CD4-positive, alpha-beta T cell (primary cell): ENCODE measurements at regions of chr12 and their contacts with region 1.

Region 1: DNA sequence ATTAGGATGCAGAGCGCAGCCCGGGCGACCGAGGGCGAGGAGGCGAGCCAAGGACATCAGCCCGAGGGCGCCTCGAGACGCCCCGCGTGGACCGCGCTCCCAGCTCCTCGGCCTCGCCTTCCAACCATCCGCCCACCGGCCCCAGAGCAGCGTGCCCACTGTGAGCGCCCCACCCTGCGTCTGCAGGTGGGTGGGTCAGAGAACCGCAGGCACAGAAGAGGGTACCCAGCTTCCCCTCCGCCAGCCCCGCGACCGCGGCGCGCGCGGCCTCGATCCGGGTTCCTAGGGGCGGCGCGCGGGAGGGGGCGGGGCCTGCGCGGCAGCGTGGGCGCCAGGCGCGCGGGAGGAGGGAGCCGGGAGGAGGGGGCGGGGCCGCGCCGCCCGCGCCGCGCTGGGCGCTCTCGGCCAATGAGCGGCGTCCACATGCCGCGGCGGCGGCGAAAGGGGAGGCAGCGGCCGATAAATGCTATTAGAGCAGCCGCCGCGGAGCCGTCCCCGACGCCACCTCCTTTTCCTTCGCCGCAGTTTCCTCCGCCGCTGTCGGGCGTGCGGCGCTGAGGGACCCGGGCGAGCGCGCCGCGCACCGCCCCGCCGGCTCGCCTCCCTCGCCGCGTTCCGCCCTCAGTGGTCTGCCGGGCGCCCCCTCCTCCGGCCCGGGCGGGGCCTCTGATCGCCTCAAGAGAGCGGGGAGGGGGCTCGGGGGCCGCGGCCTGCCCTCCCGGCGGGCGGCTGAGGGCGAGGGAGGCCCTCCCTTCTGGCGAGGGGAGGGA is at the start of gene ATP2A2:
- DNase-seq: peak; percentile 80 to 98 (median 88)
- ATAC-seq: peak; percentile 87
- H3K4me3 ChIP-seq: peak within 1 kb of the TSS; percentile 82
- H3K4me3 Mint-ChIP-seq: peak within 1 kb of the TSS; percentile 97
- H3K27ac ChIP-seq: peak within 1 kb of the TSS; percentile 40 to 77
- H3K27ac Mint-ChIP-seq: peak within 1 kb of the TSS; percentile 91
- H3K4me1 ChIP-seq: peaks cover 23% of the 10 kb centered on the region
- H3K4me1 Mint-ChIP-seq: peaks cover 46% of the 10 kb centered on the region
- H3K27me3 ChIP-seq: no peaks in the 10 kb centered on the region
- H3K27me3 Mint-ChIP-seq: no peaks in the 10 kb centered on the region
- CTCF ChIP-seq: no peak
- total RNA-seq, gene ATP2A2: 113 to 117 TPM

Region 2: GRCh38 chr12:109880016-109880931 is 400.7 kb before region 1 on chr12 and contains the start of gene GLTP:
- CTCF ChIA-PET with region 1: no interaction called
- POLR2A ChIA-PET with region 1: no interaction called
- intact Hi-C with region 1: loop called in 1 of 2 experiments (anchors 5 kb)
- DNase-seq: peak; percentile 78 to 97 (median 88)
- ATAC-seq: peak; percentile 96
- H3K4me3 ChIP-seq: peak within 1 kb of the TSS; percentile 98
- H3K4me3 Mint-ChIP-seq: peak within 1 kb of the TSS; percentile 92
- H3K27ac ChIP-seq: peak within 1 kb of the TSS; percentile 81 to 85
- H3K27ac Mint-ChIP-seq: peak within 1 kb of the TSS; percentile 87
- H3K4me1 ChIP-seq: peaks cover 35% of the 10 kb centered on the region
- H3K4me1 Mint-ChIP-seq: peaks cover 54% of the 10 kb centered on the region
- H3K27me3 ChIP-seq: no peaks in the 10 kb centered on the region
- H3K27me3 Mint-ChIP-seq: no peaks in the 10 kb centered on the region
- CTCF ChIP-seq: no peak
- total RNA-seq, gene GLTP: 24.8 to 25.2 TPM

Region 3: DNA sequence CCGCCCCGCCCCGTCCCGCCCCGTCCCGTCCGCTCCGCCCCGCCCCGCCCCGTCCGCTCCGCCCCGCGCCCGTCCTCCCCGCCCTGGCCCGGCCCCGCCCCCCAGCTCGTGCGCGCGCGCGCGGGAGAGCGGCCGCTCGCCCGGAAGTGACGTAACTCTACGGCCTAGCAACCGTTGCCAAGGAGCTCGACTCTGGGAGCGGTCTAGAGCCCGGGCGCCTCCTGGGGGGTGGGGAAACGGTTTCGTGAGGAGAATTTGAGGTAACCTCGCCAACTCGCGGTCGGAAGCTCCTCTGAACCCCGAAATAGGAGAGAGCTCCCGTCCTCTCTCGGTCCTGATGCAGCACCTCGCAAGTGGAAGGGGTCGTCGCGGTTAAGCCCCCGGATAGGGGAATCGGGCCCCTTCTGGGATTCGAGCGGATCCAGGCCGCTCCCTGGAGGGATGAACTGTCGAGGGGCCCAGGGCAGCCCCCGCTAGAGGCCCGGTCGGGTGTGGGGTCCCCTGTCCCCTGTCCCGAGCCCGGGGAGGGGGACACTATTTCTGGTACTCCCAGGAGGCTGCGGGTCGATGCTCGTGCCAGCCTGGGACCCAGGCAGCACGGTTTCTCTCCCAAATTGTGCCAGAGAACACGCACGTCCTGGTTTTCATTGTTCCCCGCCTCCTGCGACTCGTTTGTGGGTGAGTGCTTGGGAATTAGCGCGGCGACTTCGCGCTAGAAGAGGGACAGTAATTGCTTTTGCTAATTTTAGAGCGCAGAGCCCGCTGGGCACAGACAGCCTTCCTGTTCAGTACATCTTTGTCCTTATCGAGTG is 156.6 kb before region 1 on chr12 and contains the start of gene IFT81:
- CTCF ChIA-PET with region 1: no interaction called
- POLR2A ChIA-PET with region 1: interaction called, 7 read pairs
- intact Hi-C with region 1: loop called (anchors 1 to 10 kb)
- DNase-seq: peak; percentile 94 to 99 (median 96)
- ATAC-seq: peak; percentile 89
- H3K4me3 ChIP-seq: peak within 1 kb of the TSS; percentile 98
- H3K4me3 Mint-ChIP-seq: peak within 1 kb of the TSS; percentile 92
- H3K27ac ChIP-seq: peak within 1 kb of the TSS; percentile 13 to 78
- H3K27ac Mint-ChIP-seq: peak within 1 kb of the TSS; percentile 63
- H3K4me1 ChIP-seq: peaks cover 12% of the 10 kb centered on the region
- H3K4me1 Mint-ChIP-seq: peaks cover 14% of the 10 kb centered on the region
- H3K27me3 ChIP-seq: no peaks in the 10 kb centered on the region
- H3K27me3 Mint-ChIP-seq: peaks cover 5% of the 10 kb centered on the region
- CTCF ChIP-seq: no peak
- total RNA-seq, gene IFT81: 0.41 to 1.1 TPM

Region 4: DNA sequence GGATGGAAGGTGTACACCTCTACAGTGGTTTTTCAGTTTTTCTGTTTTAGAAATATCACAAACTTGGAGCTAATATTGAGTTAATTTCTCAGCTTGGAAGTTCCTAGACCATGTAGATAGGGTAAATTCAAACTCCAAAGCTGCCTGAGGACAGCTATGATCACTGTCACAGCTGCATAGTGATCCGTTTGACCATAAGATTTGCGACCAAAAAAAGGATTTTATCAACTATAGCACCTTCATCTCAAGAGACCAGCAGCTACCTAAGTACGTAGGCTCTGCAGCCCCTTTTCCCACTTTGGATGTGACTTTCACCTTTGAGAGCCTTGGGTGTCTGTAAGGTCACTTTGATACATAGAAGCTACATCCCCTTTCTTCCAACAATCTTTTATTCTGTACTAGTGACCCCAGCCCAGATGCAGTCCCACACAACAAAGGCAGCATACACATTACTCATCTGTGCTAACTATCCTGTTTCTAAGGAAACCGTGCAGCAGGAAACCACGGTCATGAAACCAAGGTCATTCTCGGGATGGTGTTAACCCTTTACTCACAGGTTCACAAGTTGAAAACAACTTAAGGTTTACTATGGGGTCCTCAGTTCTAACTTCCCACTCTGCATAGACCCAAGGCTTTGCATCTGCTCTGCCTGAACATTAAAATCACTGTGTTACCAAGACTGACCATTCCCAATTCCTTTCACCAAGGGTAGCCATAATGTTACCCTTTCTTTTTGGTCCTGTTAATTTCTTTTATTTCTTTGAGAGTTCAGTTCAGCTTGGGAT is 81.4 kb before region 1 on chr12:
- CTCF ChIA-PET with region 1: no interaction called
- POLR2A ChIA-PET with region 1: no interaction called
- intact Hi-C with region 1: no loop called
- DNase-seq: no peak
- ATAC-seq: no peak
- H3K4me3 ChIP-seq: no peak overlapping the region
- H3K4me3 Mint-ChIP-seq: no peak overlapping the region
- H3K27ac ChIP-seq: no peak overlapping the region
- H3K27ac Mint-ChIP-seq: no peak overlapping the region
- H3K4me1 ChIP-seq: no peaks in the 10 kb centered on the region
- H3K4me1 Mint-ChIP-seq: peaks cover 9% of the 10 kb centered on the region
- H3K27me3 ChIP-seq: no peaks in the 10 kb centered on the region
- H3K27me3 Mint-ChIP-seq: no peaks in the 10 kb centered on the region
- CTCF ChIP-seq: no peak

Region 5: DNA sequence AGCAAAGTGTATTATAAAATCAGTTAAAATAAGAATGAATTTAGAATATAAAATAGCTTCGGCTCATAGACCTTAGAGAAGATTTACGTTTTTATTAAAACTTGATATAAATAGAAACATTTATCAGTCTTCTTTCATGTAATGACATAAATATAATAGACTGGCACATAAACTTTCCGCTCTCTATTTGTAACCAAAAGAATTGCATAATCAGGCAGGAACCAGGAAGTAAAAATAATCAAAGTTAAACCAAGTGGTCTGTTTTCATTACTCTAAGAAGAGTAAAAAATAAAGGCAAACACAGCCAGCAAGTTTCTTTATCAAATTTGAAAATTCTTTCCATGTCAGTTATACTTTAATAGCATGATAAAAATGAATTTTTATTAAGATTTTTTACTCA is 46.2 kb before region 1 on chr12:
- CTCF ChIA-PET with region 1: no interaction called
- POLR2A ChIA-PET with region 1: no interaction called
- intact Hi-C with region 1: no loop called
- DNase-seq: no peak
- ATAC-seq: no peak
- H3K4me3 ChIP-seq: no peak overlapping the region
- H3K4me3 Mint-ChIP-seq: no peak overlapping the region
- H3K27ac ChIP-seq: no peak overlapping the region
- H3K27ac Mint-ChIP-seq: no peak overlapping the region
- H3K4me1 ChIP-seq: no peaks in the 10 kb centered on the region
- H3K4me1 Mint-ChIP-seq: no peaks in the 10 kb centered on the region
- H3K27me3 ChIP-seq: no peaks in the 10 kb centered on the region
- H3K27me3 Mint-ChIP-seq: peaks cover 1% of the 10 kb centered on the region
- CTCF ChIP-seq: no peak

Region 6: DNA sequence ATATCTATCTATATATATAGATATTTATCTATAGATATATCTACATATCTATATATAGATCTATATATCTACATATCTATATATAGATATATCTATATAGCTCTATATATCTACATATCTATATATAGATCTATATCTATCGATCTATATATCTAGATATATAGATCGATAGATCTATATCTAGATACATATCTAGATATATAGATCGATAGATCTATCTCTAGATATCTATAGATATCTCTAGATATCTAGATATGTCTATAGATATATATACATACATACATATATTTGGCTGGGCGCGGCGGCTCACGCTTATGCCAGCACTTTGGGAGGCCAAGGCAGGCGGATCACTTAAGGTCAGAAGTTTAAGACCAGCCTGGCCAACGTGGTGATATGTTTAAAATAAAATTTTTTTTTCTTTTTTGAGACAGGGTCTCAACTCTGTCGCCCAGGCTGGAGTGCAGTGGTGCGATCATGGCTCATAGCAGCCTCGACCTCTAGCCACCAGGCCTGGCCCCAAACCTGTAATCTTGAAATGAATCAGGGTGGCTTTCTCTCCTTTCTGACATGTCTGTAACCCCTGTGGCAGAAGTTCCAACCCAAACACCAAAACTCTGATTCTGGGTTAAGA is 151.1 kb after region 1 on chr12:
- CTCF ChIA-PET with region 1: interaction called, 10 read pairs
- POLR2A ChIA-PET with region 1: interaction called, 8 read pairs
- intact Hi-C with region 1: loop called (anchors 2 to 5 kb)
- DNase-seq: no peak
- ATAC-seq: no peak
- H3K4me3 ChIP-seq: peak overlapping the region; percentile 55
- H3K4me3 Mint-ChIP-seq: no peak overlapping the region
- H3K27ac ChIP-seq: no peak overlapping the region
- H3K27ac Mint-ChIP-seq: peak overlapping the region; percentile 96
- H3K4me1 ChIP-seq: peaks cover 2% of the 10 kb centered on the region
- H3K4me1 Mint-ChIP-seq: peaks cover 6% of the 10 kb centered on the region
- H3K27me3 ChIP-seq: no peaks in the 10 kb centered on the region
- H3K27me3 Mint-ChIP-seq: no peaks in the 10 kb centered on the region
- CTCF ChIP-seq: no peak

Region 7: DNA sequence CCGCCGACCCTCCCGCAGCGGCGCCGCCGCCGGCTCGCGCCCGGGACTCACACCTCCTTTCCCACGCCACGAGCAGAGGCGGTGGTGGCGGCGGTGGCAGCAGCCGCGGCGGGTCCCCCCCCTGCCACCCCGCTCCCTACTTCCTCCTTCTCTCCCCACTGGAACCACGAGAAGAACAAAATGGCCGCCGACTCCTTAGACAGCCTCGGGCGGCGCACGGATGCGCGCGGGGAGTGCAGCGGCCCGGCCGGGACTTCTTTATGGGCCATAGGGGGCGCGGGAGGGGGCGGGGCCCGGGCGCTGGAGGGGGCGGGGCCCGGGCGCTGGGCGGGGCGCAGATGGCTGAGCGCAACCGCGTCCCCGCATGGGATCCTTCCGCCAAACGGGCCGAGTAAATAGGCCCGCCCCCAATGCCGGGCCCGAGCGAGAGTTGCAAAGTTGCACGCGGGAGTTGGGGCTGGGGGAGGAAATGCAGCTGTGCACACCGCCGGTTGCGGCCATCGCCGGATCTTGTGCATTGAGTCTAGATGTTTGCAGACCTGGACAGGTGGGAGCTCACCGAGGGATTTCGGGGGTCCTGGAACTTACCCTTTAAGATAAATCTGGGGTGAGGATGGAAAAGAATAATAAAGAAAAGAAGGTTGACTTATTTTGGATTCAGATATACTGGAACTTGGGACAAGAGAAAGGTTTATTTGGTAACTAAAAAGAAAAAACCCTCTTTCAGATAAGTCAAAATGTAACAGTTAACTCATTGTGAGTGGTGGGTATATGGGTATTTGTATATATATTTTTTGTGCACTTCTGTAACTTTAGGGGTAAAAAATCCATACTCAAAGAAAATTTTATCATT is 462.0 kb after region 1 on chr12 and contains the start of gene PPP1CC:
- CTCF ChIA-PET with region 1: no interaction called
- POLR2A ChIA-PET with region 1: interaction called, 3 read pairs
- intact Hi-C with region 1: loop called in 1 of 2 experiments (anchors 5 kb)
- DNase-seq: peak; percentile 81 to 97 (median 90)
- ATAC-seq: peak; percentile 90
- H3K4me3 ChIP-seq: peak within 1 kb of the TSS; percentile 95
- H3K4me3 Mint-ChIP-seq: peak within 1 kb of the TSS; percentile 100
- H3K27ac ChIP-seq: peak within 1 kb of the TSS; percentile 50 to 71
- H3K27ac Mint-ChIP-seq: peak within 1 kb of the TSS; percentile 98
- H3K4me1 ChIP-seq: peaks cover 22% of the 10 kb centered on the region
- H3K4me1 Mint-ChIP-seq: peaks cover 57% of the 10 kb centered on the region
- H3K27me3 ChIP-seq: no peaks in the 10 kb centered on the region
- H3K27me3 Mint-ChIP-seq: no peaks in the 10 kb centered on the region
- CTCF ChIP-seq: no peak
- total RNA-seq, gene PPP1CC: 146 to 150 TPM

Region 8: GRCh38 chr12:111887926-111888745 is 1607.2 kb after region 1 on chr12:
- CTCF ChIA-PET with region 1: no interaction called
- POLR2A ChIA-PET with region 1: no interaction called
- intact Hi-C with region 1: no loop called
- DNase-seq: no peak
- ATAC-seq: no peak
- H3K4me3 ChIP-seq: no peak overlapping the region
- H3K4me3 Mint-ChIP-seq: no peak overlapping the region
- H3K27ac ChIP-seq: no peak overlapping the region
- H3K27ac Mint-ChIP-seq: no peak overlapping the region
- H3K4me1 ChIP-seq: no peaks in the 10 kb centered on the region
- H3K4me1 Mint-ChIP-seq: no peaks in the 10 kb centered on the region
- H3K27me3 ChIP-seq: no peaks in the 10 kb centered on the region
- H3K27me3 Mint-ChIP-seq: no peaks in the 10 kb centered on the region
- CTCF ChIP-seq: no peak